Activated CD4-positive, alpha-beta T cell treated with anti-CD3 and anti-CD28 coated beads, Interleukin-2, amount 10 ng/mL, durations not matched to agents 7 days and 5 days (primary cell): ENCODE measurements at regions of chr1 and their contacts with region 1.

Region 1: GRCh38 chr1:93629099-93630059 is 52.3 kb downstream of the BCAR3 start:
- DNase-seq: peak; percentile 63
- H3K4me3 Mint-ChIP-seq: no peak overlapping the region
- H3K27ac Mint-ChIP-seq: no peak overlapping the region
- H3K4me1 Mint-ChIP-seq: no peaks in the 10 kb centered on the region
- H3K27me3 Mint-ChIP-seq: no peaks in the 10 kb centered on the region

Region 2: DNA sequence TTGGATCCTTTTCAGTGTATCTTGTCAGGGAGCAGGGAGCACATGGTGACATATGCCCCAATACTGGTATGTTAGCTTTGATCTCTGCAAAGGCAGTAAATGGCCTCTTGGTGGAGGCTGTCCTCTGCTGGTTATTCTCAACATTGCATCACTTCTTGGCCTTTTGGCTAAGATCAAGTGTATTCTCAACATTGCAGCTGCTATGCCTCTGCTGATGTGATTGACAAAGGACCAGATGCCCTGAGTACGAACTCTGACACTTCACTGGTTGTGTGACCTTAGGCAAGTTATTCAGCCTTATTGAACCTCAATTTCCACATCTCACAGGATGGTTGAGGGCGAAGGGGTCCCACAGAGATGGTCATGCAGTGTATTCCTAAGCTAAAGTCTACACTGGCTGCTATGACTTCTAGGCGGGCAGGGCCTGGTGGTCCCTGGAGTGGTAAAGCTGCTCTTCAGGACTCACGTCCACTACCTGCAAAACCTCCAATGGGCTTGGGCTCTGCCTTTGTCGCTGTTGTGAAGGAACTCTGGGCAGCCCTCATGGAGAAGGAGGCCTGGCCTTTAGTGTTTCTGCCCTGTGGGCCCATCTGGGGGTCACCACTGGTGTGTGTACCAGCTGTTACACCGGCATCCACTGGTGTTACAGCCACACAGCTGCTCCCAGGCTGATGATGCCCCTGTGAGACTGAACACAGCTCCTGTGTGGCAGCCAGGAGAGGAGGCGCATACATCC is 184.8 kb after region 1 on chr1:
- CTCF ChIA-PET with region 1: interaction called, 72 read pairs
- POLR2A ChIA-PET with region 1: no interaction called
- DNase-seq: peak; percentile 72
- H3K4me3 Mint-ChIP-seq: no peak overlapping the region
- H3K27ac Mint-ChIP-seq: no peak overlapping the region
- H3K4me1 Mint-ChIP-seq: peaks cover 22% of the 10 kb centered on the region
- H3K27me3 Mint-ChIP-seq: no peaks in the 10 kb centered on the region